GM18951 (cell line): ENCODE measurements at regions of chr15 and their contacts with region 1.

Region 1: DNA sequence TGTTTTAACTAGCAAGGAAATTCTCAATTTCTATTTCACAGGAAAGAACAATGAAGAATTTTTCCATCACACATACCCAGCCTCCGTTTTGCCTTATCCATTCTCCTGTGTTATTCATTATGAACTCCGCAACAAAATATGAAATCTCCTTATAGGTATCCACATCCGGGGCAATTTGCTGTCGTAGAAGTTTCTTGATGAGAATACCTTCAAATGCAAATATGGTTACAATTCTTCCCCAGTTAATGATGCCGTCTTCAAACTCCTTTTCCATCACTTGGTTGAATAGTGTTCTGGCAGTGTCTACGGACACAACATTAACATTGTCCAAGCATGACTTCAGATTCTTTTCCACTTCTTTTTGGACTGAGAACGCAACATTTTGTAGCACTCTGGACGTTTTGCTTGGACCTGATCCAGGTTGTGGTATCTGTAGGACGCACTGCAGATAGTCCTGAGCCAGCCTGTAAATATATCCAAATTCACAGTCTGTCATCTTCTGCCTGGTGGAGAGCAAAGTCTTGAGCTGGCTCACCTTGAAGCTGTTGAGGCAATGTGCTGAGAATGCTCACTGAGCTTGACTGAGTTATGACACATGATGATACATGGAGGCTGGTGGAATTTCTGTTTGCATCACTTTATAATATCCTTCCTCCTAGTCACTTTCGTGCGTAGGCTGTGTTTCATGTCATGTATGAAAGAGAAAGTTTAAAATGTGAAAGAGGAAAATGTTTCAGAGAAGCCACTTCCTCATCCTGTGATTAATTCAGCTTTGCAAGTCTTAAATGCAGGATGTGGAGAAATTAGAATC is at the start of gene BCL2A1:
- POLR2A ChIP-seq: peak; percentile 65

Region 2: GRCh38 chr15:79779746-79780145 is 191.1 kb before region 1 on chr15:
- in situ Hi-C with region 1: loop called (anchors 10 kb)
- POLR2A ChIP-seq: no peak